ENCODE measurements at regions of chr12 and their contacts with region 1.

Region 1: GRCh38 chr12:15011162-15011561 is 38.3 kb downstream of the PDE6H start:
- DNase-seq: no peak
- ATAC-seq: no peak
- H3K4me3 ChIP-seq: no peak overlapping the region
- H3K4me3 Mint-ChIP-seq: no peak overlapping the region
- H3K27ac ChIP-seq: no peak overlapping the region
- H3K27ac Mint-ChIP-seq: no peak overlapping the region
- H3K4me1 ChIP-seq: no peaks in the 10 kb centered on the region
- H3K4me1 Mint-ChIP-seq: no peaks in the 10 kb centered on the region
- H3K27me3 ChIP-seq: no peaks in the 10 kb centered on the region
- H3K27me3 Mint-ChIP-seq: peaks cover 11 to 28% (median 18%) of the 10 kb centered on the region in 5 donors

Region 2: DNA sequence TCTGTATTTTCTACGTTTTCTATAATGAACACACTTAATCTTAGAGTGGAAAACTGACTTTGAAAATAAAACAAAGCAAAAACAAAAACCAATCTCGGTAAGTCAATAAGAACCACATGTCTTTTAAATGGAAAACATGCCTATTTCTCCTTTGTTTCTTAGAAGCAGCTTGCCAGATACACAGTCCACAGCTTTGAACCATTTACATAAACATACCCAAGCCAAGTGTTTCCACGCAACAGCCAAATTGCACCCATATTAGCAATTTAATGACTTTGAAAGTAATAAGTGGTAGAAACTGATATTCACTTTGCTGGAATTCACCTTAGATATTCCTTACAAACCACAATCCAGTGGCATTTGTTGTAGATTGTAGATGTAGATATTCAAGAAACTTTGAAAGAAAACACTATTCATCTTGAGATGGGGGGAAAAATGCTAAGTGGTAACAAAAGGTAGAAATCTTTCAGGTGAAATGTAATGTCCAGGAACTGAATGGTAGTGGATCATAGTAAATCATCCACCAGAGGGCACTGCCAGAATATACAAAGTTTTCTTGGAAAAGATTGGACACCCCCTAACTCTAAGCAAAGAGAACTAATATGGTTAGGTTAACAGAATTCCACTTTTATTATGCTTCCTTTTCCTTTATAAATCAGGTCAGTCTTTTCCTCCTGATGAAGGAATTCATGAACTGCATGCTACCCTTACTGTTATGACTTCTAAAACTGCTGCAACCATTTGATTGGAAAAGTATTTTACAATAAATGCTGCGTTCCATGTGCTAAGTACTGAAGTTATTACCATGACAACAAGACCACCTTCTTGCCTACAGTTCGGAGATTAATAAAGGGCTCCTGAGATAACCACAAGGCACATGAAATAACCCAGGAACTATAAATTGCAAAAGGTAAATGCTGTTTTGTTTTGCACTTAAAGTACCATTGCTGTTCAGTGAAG is 140.3 kb after region 1 on chr12:
- CTCF ChIA-PET with region 1: no interaction called
- POLR2A ChIA-PET with region 1: no interaction called
- intact Hi-C with region 1: loop called in 1 of 2 experiments (anchors 2 kb)
- DNase-seq: peak in 2 of 9 donors; percentile 1
- ATAC-seq: no peak
- H3K4me3 ChIP-seq: no peak overlapping the region
- H3K4me3 Mint-ChIP-seq: no peak overlapping the region
- H3K27ac ChIP-seq: no peak overlapping the region
- H3K27ac Mint-ChIP-seq: no peak overlapping the region
- H3K4me1 ChIP-seq: no peaks in the 10 kb centered on the region
- H3K4me1 Mint-ChIP-seq: no peaks in the 10 kb centered on the region
- H3K27me3 ChIP-seq: no peaks in the 10 kb centered on the region
- H3K27me3 Mint-ChIP-seq: peaks cover 0 to 30% (median 7%) of the 10 kb centered on the region in 5 donors